PC-3 (cell line): ENCODE measurements at regions of chr14 and their contacts with region 1.

Region 1: GRCh38 chr14:54773171-54773975 is 129.3 kb downstream of the GCH1 start:
- DNase-seq: peak; percentile 100
- ATAC-seq: peak; percentile 90
- H3K4me3 ChIP-seq: peak overlapping the region; percentile 44
- H3K27ac ChIP-seq: peak overlapping the region; percentile 85
- H3K4me1 ChIP-seq: peaks cover 30% of the 10 kb centered on the region
- H3K27me3 ChIP-seq: no peaks in the 10 kb centered on the region
- CTCF ChIP-seq: peak; percentile 96

Region 2: GRCh38 chr14:54503476-54504257 is 269.7 kb before region 1 on chr14:
- CTCF ChIA-PET with region 1: interaction called, 15 read pairs
- POLR2A ChIA-PET with region 1: no interaction called
- intact Hi-C with region 1: loop called (anchors 2 kb)
- DNase-seq: peak; percentile 88
- ATAC-seq: peak; percentile 95
- H3K4me3 ChIP-seq: no peak overlapping the region
- H3K27ac ChIP-seq: no peak overlapping the region
- H3K4me1 ChIP-seq: 0 out of 2 replicates have a peak, but pooled peaks cover 4% of the 10 kb centered on the region
- H3K27me3 ChIP-seq: no peaks in the 10 kb centered on the region
- CTCF ChIP-seq: peak; percentile 92

Region 3: DNA sequence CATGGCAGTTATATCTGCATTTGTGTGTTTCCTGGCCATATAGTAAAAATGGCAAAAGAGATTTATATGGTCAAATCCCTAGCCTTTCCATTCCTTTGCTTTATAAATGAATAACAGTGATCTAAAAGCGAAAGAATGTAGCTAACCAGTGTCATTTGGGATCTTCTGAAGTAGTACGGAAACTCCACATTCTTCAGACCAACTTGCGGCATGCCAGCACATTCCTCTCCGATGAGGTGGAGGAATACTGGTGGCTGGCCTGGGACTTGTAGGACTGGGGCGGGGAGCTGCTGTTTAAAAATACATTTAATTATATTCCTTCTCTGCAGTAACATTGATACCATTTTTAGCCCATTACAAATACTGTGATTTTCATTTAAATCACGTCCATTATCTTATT is 121.2 kb before region 1 on chr14:
- CTCF ChIA-PET with region 1: interaction called, 9 read pairs
- POLR2A ChIA-PET with region 1: no interaction called
- intact Hi-C with region 1: loop called (anchors 1 kb)
- DNase-seq: peak; percentile 100
- ATAC-seq: peak; percentile 97
- H3K4me3 ChIP-seq: peak overlapping the region; percentile 45
- H3K27ac ChIP-seq: peak overlapping the region; percentile 90
- H3K4me1 ChIP-seq: peaks cover 62% of the 10 kb centered on the region
- H3K27me3 ChIP-seq: no peaks in the 10 kb centered on the region
- CTCF ChIP-seq: no peak

Region 4: GRCh38 chr14:54676812-54677708 is 96.3 kb before region 1 on chr14:
- CTCF ChIA-PET with region 1: interaction called, 5 read pairs
- POLR2A ChIA-PET with region 1: no interaction called
- intact Hi-C with region 1: loop called (anchors 5 kb)
- DNase-seq: peak; percentile 99
- ATAC-seq: peak; percentile 95
- H3K4me3 ChIP-seq: peak overlapping the region; percentile 46
- H3K27ac ChIP-seq: peak overlapping the region; percentile 80
- H3K4me1 ChIP-seq: peaks cover 49% of the 10 kb centered on the region
- H3K27me3 ChIP-seq: no peaks in the 10 kb centered on the region
- CTCF ChIP-seq: no peak

Region 5: DNA sequence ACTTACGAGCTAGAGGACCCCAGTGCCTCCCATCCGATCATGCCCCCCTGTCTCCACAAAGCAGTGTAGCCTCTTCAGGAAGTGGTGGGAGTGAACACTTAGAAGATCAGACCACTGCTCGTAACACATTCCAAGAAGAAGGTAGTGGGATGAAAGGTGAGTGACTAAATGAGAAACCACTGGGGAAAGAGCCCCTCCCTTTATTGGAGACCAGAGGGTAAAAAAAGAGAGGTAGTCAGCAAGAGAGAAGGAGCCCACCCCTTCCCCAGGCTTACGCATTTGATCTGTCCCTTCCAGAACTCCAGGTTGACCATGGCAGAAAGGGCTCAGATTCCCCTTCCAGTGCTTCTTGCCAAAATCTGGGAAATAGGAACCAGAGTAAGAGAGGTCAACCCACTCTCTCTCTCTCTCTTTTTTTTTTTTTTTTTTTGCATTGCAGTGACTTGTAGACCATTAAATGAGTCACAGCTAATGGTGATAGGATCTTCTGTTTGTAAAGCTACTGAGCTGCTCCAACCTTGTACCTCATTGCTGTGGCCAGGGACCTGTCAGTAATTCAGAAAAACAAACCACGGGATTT is 36.2 kb before region 1 on chr14:
- CTCF ChIA-PET with region 1: interaction called, 5 read pairs
- POLR2A ChIA-PET with region 1: interaction called, 16 read pairs
- intact Hi-C with region 1: loop called (anchors 1 kb)
- DNase-seq: peak; percentile 94
- ATAC-seq: peak; percentile 81
- H3K4me3 ChIP-seq: peak overlapping the region; percentile 50
- H3K27ac ChIP-seq: peak overlapping the region; percentile 91
- H3K4me1 ChIP-seq: peaks cover 37% of the 10 kb centered on the region
- H3K27me3 ChIP-seq: no peaks in the 10 kb centered on the region
- CTCF ChIP-seq: no peak